ENCODE measurements at regions of chr2 and their contacts with region 1.

Region 1: GRCh38 chr2:188495990-188496431 is 204.3 kb downstream of the GULP1 start:
- DNase-seq: peak; percentile 86
- ATAC-seq: peak; percentile 74
- H3K4me3 ChIP-seq: peak overlapping the region in 1 of 2 experiments; percentile 22; a peak in 1 of 4 replicates
- H3K27ac ChIP-seq: peak overlapping the region; percentile 91
- H3K4me1 ChIP-seq: peaks cover 56 to 58% of the 10 kb centered on the region in 2 experiments
- H3K27me3 ChIP-seq: no peaks in the 10 kb centered on the region
- CTCF ChIP-seq: no peak
- POLR2A ChIP-seq: no peak
- RAD21 ChIP-seq: 0 out of 2 replicates have a peak, but pooled peaks have one; percentile 12

Region 2: GRCh38 chr2:188158337-188159100 is 337.5 kb before region 1 on chr2:
- CTCF ChIA-PET with region 1: no interaction called
- POLR2A ChIA-PET with region 1: no interaction called
- RAD21 ChIA-PET with region 1: no interaction called
- intact Hi-C with region 1: no loop called
- DNase-seq: no peak
- ATAC-seq: no peak
- H3K4me3 ChIP-seq: no peak overlapping the region
- H3K27ac ChIP-seq: no peak overlapping the region
- H3K4me1 ChIP-seq: no peaks in the 10 kb centered on the region
- H3K27me3 ChIP-seq: no peaks in the 10 kb centered on the region
- CTCF ChIP-seq: no peak
- POLR2A ChIP-seq: no peak
- RAD21 ChIP-seq: no peak

Region 3: DNA sequence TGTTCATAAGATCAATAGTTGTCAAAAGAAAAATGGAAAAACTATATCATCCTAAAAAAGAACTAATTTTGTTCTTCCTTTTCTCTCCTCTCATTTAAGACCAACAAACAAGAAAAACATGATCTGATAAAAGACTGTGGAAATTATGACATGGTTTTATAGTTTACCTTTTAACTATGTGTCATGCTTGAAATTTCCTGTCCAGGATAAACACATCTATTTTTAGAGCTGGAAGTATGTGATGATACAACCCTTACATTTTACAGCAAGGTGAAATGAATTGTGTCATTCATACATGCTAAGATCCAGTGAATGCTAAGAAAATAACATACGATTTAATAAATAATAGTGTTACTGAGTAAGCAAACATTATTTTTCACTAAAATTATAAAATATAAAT is 114.4 kb before region 1 on chr2:
- CTCF ChIA-PET with region 1: no interaction called
- POLR2A ChIA-PET with region 1: no interaction called
- RAD21 ChIA-PET with region 1: no interaction called
- intact Hi-C with region 1: loop called (anchors 5 kb)
- DNase-seq: peak; percentile 83
- ATAC-seq: peak; percentile 56
- H3K4me3 ChIP-seq: peak overlapping the region; percentile 14 to 41; a peak in 2 of 4 replicates
- H3K27ac ChIP-seq: peak overlapping the region; percentile 79; the same call in 1 of the 2 replicates
- H3K4me1 ChIP-seq: peaks cover 47 to 57% of the 10 kb centered on the region in 2 experiments
- H3K27me3 ChIP-seq: no peaks in the 10 kb centered on the region
- CTCF ChIP-seq: no peak
- POLR2A ChIP-seq: no peak
- RAD21 ChIP-seq: peak; percentile 44